Astrocyte of the cerebellum (primary cell): ENCODE measurements at regions of chrX and their contacts with region 1.

Region 1: DNA sequence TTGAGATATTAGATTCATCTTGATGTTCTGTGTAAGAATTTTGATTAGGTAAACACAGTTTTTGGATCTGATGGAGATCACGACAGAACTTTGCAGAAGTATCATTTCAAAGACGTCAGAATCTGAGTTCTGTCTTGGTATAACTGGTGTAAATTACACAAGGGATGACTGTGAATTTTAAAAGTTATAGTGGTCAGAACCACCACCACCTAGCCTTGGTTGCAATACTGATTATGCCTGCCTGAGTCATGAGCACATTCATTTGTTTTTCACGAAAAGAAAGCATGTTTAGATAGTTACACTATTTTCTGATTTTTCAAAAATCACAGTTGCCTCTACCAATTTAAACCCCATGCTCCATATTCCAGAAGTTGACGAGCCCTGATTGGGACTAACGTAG is 54.8 kb downstream of the ZFX start:
- DNase-seq: no peak
- H3K4me3 ChIP-seq: no peak overlapping the region
- CTCF ChIP-seq: no peak

Region 2: GRCh38 chrX:24133280-24133679 is 71.1 kb before region 1 on chrX:
- in situ Hi-C with region 1: no loop called
- DNase-seq: no peak
- H3K4me3 ChIP-seq: no peak overlapping the region
- CTCF ChIP-seq: no peak

Region 3: DNA sequence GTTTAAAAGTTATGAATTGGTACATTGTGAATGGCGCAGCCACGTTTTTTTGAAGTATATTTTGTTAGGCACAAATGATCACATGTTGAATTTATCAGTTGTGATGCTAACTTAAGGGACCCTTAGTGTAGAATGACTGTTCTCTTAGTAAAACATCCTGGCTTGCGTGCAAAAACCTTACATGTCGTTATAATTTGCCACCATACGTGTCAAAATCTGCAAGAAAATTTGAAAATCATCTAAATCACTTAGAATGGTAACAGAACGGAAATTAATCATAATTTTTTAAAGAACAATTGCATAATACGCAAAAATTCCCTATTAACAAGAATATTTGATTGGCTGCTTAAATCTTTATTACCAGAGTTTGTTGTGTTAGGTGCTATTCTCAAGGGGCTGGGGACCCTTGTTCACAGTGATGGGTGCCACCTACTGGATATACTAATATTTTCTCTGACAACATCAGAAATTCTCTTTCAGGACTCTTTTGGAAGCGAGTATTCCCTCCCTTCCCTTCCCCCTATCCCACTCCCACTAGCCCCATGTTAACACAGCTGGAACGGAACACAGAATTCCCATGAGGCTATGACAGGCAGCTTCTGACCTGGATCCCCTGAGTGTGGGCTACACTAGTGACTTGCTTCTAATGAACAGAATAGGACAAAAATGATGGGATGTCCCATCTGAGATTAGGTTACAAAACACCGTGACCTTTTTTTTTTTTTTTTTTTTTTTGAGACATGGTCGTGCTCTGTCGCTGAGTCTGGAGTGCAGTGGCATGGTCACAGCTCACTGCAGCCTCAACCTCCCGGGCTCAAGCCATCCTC is 37.7 kb after region 1 on chrX:
- in situ Hi-C with region 1: loop called (anchors 5 kb)
- DNase-seq: peak; percentile 22
- H3K4me3 ChIP-seq: no peak overlapping the region
- CTCF ChIP-seq: peak; percentile 48